ENCODE measurements at regions of chr3 and their contacts with region 1.

Region 1: DNA sequence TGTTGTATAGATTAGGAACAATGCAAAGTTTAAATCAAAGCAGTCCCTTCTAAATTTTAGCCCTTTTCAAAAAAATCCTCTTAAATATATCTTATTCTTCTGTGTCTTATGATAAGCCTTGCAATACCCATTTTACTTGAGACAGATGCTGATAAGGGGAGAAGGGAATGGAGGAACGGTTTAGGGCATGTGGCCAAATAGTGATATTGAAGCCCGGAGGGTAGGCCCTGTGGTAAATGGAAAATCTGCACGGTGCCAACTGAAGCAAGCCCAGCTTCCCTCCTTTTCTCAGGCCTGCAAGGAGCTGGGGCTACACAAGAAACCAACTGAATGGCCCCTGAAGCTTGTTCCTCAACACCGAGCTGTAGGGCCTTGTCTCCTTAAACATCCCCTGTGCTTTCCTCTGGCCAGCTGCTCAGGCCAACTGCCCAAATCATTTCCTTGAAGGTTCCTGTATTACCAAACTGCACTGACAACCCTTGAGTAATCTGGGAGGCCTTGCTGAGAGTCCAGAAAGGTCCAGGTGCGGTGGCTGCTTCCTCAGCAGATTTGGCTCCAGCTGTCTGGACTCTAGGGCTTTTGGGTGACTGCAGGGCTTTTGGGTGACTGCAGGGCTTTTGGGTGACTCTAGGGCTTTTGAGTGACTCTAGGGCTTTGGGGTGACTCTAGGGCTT is 67.2 kb downstream of the NCEH1 start:
- DNase-seq: no peak
- H3K4me3 ChIP-seq: no peak overlapping the region
- H3K27ac ChIP-seq: no peak overlapping the region
- H3K4me1 ChIP-seq: peaks cover 11% of the 10 kb centered on the region
- H3K27me3 ChIP-seq: no peaks in the 10 kb centered on the region
- CTCF ChIP-seq: no peak
- POLR2A ChIP-seq: no peak

Region 2: DNA sequence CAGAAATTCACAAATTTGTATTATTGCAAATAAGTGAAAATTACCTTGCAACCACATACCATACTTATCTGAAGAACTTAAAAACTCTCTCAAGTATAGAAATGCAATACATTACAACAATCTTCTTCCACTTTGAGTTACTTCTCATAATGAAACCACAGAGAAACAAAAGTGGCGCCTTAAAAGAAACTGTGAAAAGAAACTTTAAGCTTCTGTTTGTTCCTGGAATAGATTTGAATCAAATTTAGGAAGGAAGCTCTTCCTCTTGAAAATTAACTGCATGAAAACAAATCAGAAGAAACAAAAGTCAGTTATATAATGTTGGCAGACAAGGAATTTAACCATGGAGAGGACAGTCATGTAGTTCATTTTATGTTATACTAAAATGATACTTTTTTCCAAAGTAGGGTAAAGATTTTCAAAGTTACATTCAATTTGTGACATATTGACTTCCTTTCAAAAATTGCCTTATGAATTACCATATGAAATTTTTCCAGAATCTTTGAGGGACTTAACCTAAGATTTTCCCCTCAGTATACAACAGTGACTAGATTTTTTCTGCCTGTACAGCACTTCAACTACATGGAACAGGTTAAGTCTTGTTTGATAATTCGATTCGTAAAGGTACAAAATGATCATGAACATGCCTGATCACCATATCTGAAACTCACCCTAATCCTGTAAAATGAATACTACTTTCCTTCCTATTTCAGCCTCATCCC is 62.8 kb before region 1 on chr3:
- CTCF ChIA-PET with region 1: no interaction called
- POLR2A ChIA-PET with region 1: no interaction called
- dilution Hi-C with region 1: no loop called
- intact Hi-C with region 1: no loop called
- DNase-seq: peak; percentile 43
- H3K4me3 ChIP-seq: no peak overlapping the region
- H3K27ac ChIP-seq: no peak overlapping the region
- H3K4me1 ChIP-seq: no peaks in the 10 kb centered on the region
- H3K27me3 ChIP-seq: peaks cover 0 to 5% of the 10 kb centered on the region in 2 experiments
- CTCF ChIP-seq: no peak
- POLR2A ChIP-seq: no peak

Region 3: GRCh38 chr3:172658344-172659245 is 15.0 kb after region 1 on chr3:
- CTCF ChIA-PET with region 1: interaction called, 10 read pairs
- POLR2A ChIA-PET with region 1: no interaction called
- dilution Hi-C with region 1: no loop called
- intact Hi-C with region 1: no loop called
- DNase-seq: peak; percentile 95
- H3K4me3 ChIP-seq: no peak overlapping the region
- H3K27ac ChIP-seq: peak overlapping the region; percentile 79
- H3K4me1 ChIP-seq: peaks cover 16% of the 10 kb centered on the region
- H3K27me3 ChIP-seq: no peaks in the 10 kb centered on the region
- CTCF ChIP-seq: no peak
- POLR2A ChIP-seq: no peak